Stomach (tissue), 19 donors: ENCODE measurements at regions of chr21 and their contacts with region 1.

Region 1: GRCh38 chr21:26835027-26835713 is 10.0 kb downstream of the ADAMTS1 start:
- DNase-seq: no peak
- H3K4me3 ChIP-seq: no peak overlapping the region
- H3K27ac ChIP-seq: peak overlapping the region in 2 of 5 donors; percentile 18 to 34
- H3K4me1 ChIP-seq: peaks cover 0 to 28% (median 13%) of the 10 kb centered on the region in 4 donors
- H3K27me3 ChIP-seq: no peaks in the 10 kb centered on the region
- CTCF ChIP-seq: no peak
- EP300 ChIP-seq: no peak
- POLR2A ChIP-seq: no peak

Region 2: DNA sequence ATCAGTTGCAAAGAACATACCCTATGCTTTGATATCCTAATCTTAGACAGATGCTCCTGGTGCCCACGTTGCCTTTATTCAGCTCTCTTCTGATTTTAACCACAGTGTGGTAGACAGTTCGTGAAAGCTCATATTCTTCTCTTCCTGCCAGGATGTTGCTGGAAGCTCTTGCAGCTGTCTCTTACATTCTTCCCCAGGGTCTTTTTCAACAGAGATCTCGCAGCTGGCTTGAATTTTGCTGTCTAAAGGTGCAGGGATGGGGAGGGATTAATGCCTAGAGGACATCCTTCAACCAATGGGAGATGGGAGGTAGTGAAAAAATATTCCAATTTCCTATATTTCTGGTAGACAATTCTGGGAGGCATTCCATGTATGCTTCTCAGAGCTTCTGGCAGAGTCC is 514.6 kb before region 1 on chr21:
- intact Hi-C with region 1: no loop called
- DNase-seq: peak in 1 of 2 donors; percentile 9
- H3K4me3 ChIP-seq: no peak overlapping the region
- H3K27ac ChIP-seq: no peak overlapping the region
- H3K4me1 ChIP-seq: peaks cover 0 to 8% (median 3%) of the 10 kb centered on the region in 4 donors
- H3K27me3 ChIP-seq: no peaks in the 10 kb centered on the region
- CTCF ChIP-seq: no peak
- EP300 ChIP-seq: no peak
- POLR2A ChIP-seq: no peak

Region 3: GRCh38 chr21:26659182-26659581 is 176.0 kb before region 1 on chr21:
- intact Hi-C with region 1: no loop called
- DNase-seq: no peak
- H3K4me3 ChIP-seq: no peak overlapping the region
- H3K27ac ChIP-seq: no peak overlapping the region
- H3K4me1 ChIP-seq: no peaks in the 10 kb centered on the region
- H3K27me3 ChIP-seq: no peaks in the 10 kb centered on the region
- CTCF ChIP-seq: no peak
- EP300 ChIP-seq: no peak
- POLR2A ChIP-seq: no peak

Region 4: GRCh38 chr21:26769613-26770188 is 65.5 kb before region 1 on chr21:
- intact Hi-C with region 1: loop called (anchors 5 kb)
- DNase-seq: peak in 1 of 2 donors; percentile 73
- H3K4me3 ChIP-seq: no peak overlapping the region
- H3K27ac ChIP-seq: no peak overlapping the region
- H3K4me1 ChIP-seq: no peaks in the 10 kb centered on the region
- H3K27me3 ChIP-seq: no peaks in the 10 kb centered on the region
- CTCF ChIP-seq: peak in 5 of 7 experiments; percentile 4 to 53 (median 25)
- EP300 ChIP-seq: no peak
- POLR2A ChIP-seq: no peak